ENCODE measurements at regions of chr5 and their contacts with region 1.

Region 1: DNA sequence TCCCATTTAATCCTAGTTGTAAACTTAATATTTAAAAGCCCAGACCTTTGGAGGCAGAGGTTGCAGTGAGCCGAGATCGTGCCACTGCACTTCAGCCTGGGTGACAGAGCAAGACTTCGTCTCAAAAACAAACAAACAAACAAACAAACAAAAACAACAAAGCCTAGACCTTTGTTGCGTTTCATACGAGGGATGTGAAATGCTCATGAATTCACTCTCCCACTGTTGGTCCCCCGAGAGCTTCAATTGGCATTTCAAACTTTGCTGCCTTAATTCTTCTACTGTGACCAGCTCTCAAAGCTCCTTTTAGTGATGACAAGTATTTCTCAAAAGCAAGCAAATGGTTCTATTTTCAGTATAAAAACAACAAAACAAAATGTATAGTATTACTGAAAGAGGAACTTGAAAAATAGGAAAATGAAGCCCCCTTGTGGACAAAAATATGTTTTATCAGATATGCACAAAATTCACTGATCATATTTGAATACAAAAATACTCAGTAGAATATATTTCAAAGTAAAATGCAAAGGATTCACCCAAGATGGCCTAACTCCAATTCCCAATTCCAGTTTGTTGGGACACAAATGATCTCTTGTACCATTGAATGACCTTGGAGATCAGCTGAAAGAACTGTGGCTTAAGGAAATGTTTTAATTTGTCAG is 140.4 kb downstream of the ESM1 start:
- DNase-seq: peak in 1 of 2 donors; percentile 77
- H3K4me3 ChIP-seq: peak overlapping the region; percentile 1 to 23 (median 13)
- H3K27ac ChIP-seq: peak overlapping the region in 2 of 5 donors; percentile 3 to 9
- H3K4me1 ChIP-seq: peaks cover 0 to 11% (median 0%) of the 10 kb centered on the region in 4 donors
- H3K27me3 ChIP-seq: no peaks in the 10 kb centered on the region
- CTCF ChIP-seq: peak in 5 of 7 experiments; percentile 26 to 62 (median 56)
- EP300 ChIP-seq: no peak
- POLR2A ChIP-seq: no peak

Region 2: DNA sequence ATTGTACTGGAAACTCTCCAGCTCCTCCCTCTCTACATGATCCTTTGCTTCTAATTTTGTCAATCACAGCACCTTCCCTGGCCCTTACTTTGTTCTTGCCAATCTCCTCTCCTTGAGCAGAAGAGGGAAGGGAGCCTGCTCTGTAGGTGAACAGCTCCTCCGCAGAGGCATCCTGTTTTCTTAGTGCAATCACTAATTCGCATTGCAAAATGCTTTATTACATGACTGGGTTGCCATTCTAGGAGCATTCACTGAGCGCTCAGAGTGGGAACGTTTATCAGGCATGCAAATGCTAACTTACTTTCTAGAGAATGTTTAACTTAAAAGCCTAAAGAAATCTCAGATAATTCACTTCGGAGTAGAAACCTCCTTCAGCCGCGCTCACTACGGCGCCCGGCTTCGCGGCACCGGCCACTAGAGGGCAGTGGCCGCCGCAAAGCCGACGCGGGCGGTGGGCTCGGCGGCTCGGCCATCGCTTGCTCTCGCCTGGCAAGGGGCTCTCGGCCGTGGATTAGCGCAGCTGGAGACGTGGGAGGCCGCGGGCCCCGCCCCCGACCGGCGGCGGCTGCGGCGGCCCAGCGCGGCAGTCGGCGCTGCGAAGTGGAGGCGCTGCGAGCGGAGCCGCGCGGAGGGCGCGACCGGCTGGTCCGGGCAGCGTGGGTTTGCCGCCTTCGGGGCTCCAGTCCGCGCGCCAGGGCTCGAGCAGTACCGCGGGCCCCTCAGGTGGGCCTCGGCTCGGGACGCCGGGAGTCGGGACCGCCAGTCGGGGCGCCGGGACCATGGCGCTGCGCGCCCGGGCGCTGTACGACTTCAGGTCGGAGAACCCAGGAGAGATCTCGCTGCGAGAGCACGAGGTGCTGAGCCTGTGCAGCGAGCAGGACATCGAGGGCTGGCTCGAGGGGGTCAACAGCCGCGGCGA is 327.6 kb before region 1 on chr5 and contains the start of gene SNX18:
- intact Hi-C with region 1: loop called (anchors 5 kb)
- DNase-seq: peak; percentile 94 to 98
- H3K4me3 ChIP-seq: peak within 1 kb of the TSS; percentile 85 to 100 (median 98)
- H3K27ac ChIP-seq: peak within 1 kb of the TSS; percentile 95 to 98 (median 96)
- H3K4me1 ChIP-seq: peaks cover 14 to 46% (median 35%) of the 10 kb centered on the region in 4 donors
- H3K27me3 ChIP-seq: no peaks in the 10 kb centered on the region
- CTCF ChIP-seq: peak in 6 of 7 experiments; percentile 10 to 98 (median 94)
- EP300 ChIP-seq: no peak
- POLR2A ChIP-seq: no peak
- total RNA-seq, gene SNX18: 23.9 to 77.9 (median 40.4) TPM

Region 3: DNA sequence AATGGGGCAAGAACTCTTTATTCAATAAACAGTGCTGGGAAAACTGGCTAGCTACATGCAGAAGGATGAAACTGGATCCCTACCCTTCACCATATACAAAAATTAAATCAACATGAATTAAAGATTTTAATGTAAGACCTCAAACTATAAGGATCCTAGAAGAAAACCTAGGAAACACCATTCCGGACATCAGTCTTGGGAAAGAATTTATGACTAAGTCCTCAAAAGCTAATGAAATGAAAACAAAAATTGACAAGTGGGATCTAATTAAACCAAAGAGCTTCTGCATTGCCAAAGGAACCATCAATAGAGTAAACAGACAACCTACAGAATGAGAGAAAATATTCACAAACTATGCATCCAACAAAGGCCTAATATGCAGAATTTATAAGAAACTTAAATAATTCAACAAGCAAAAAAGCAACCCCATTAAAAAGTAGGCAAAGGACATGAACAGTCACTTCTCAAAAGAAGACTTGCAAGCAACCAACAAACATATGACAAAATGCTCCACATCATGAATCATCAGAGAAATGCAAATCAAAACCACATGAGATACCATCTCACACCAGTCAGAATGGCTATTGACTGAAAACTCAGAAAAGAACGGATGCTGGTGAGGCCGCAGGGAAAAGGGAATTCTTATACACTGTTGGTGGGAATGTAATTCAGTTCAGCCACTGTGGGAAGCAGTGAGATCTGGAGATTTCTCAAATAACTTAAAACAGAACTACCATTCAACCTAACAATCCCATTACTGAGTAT is 1866.0 kb after region 1 on chr5:
- intact Hi-C with region 1: no loop called
- DNase-seq: no peak
- H3K4me3 ChIP-seq: no peak overlapping the region
- H3K27ac ChIP-seq: no peak overlapping the region
- H3K4me1 ChIP-seq: peaks cover 0 to 9% (median 6%) of the 10 kb centered on the region in 4 donors
- H3K27me3 ChIP-seq: no peaks in the 10 kb centered on the region
- CTCF ChIP-seq: no peak
- EP300 ChIP-seq: no peak
- POLR2A ChIP-seq: no peak